ENCODE measurements at regions of chr12 and their contacts with region 1.

Region 1: GRCh38 chr12:92582475-92582874 is 120.3 kb upstream of the PLEKHG7 start:
- DNase-seq: no peak
- H3K4me3 ChIP-seq: no peak overlapping the region
- H3K27ac ChIP-seq: no peak overlapping the region
- H3K4me1 ChIP-seq: no peaks in the 10 kb centered on the region
- H3K27me3 ChIP-seq: no peaks in the 10 kb centered on the region

Region 2: DNA sequence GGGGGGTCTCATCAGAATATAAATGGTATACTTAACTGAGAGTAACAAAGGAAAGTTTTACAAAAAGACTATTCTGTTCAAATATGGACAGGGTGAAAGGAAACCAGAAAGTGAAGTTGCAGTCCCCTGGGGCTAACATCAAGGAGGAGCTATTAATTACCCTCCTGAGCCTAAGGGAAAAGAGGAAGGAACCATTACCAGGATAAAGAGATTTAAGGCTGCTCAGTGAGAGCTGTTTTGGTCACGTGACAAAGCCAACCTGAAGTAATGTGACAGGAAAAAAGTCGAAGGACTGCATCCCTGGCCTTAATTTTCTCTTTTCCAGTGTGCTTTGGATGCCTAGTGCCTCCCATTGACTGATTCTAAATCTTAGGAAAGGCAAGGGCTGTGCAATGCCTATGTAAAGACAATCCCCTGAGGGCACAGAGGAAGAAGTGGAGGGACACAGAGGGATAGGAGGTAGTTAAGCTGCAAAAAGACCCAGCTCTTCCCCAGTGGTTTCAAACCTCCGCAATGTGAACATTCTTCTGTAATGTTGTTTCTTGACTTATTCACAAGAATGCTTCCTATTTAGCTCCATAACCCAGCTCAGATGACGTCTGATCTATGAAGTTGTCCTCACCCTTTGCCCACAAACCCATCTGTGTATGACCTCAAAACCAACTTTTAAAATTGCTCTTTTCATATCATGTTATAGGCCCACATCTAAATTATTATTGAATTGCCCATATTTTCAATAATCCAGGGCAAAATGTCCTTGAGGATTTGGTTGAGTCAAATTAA is 1212.2 kb before region 1 on chr12:
- in situ Hi-C with region 1: loop called (anchors 10 kb)
- DNase-seq: no peak
- H3K4me3 ChIP-seq: no peak overlapping the region
- H3K27ac ChIP-seq: no peak overlapping the region
- H3K4me1 ChIP-seq: no peaks in the 10 kb centered on the region
- H3K27me3 ChIP-seq: no peaks in the 10 kb centered on the region

Region 3: DNA sequence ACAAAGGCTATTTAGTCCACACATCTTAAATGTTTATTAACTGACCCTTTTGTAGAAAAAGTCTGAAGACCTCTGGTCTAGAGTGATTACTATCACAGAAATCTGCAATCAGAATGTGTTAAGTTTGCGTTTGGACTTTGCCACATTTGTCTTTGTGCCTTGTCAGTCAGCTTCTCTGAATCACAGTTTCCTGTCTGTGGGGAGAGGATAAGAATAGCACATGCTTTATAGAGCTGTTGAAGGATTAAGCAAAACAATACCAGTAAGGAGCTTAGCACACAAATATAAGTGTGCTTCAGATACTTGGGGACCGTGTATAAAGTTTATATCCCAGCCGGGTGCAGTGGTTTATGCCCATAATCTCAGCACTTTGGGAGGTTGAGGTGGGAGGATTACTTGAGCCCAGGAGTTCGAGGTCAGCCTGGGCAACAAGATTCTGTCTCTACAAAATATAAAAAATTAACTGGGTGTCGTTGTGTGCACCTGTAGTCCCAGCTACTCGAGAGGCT is 373.8 kb before region 1 on chr12:
- in situ Hi-C with region 1: no loop called
- DNase-seq: peak; percentile 72
- H3K4me3 ChIP-seq: no peak overlapping the region
- H3K27ac ChIP-seq: peak overlapping the region; percentile 47
- H3K4me1 ChIP-seq: peaks cover 8% of the 10 kb centered on the region; the same call in 1 of the 2 replicates
- H3K27me3 ChIP-seq: no peaks in the 10 kb centered on the region

Region 4: DNA sequence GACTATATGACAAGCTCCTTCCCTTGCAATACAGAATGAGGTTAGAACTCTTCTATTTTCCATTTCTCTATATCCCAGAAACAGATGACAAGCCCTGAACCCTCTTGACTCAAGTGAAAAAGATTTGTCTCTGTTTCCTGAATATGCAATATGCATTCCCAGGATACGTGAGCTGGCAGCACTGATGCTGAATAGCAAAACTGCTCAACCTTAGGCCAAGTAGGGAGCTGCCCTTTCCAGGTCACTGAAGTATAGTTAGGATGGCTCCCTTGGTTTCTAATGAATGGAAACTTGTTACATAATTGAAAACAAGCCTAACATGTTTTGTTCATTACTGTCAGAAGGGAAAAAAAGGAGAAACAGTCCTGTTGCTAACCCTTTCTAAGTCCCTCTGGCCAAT is 72.5 kb after region 1 on chr12:
- in situ Hi-C with region 1: no loop called
- DNase-seq: peak; percentile 86
- H3K4me3 ChIP-seq: no peak overlapping the region
- H3K27ac ChIP-seq: peak overlapping the region; percentile 55
- H3K4me1 ChIP-seq: peaks cover 15% of the 10 kb centered on the region
- H3K27me3 ChIP-seq: no peaks in the 10 kb centered on the region

Region 5: GRCh38 chr12:92879698-92880305 is 297.3 kb after region 1 on chr12:
- in situ Hi-C with region 1: no loop called
- DNase-seq: no peak
- H3K4me3 ChIP-seq: no peak overlapping the region
- H3K27ac ChIP-seq: no peak overlapping the region
- H3K4me1 ChIP-seq: peaks cover 9% of the 10 kb centered on the region; the same call in 1 of the 2 replicates
- H3K27me3 ChIP-seq: no peaks in the 10 kb centered on the region

Measured in GM23248 (cell line).